Naive thymus-derived CD4-positive, alpha-beta T cell (primary cell): ENCODE measurements at regions of chr7 and their contacts with region 1.

Region 1: GRCh38 chr7:22854158-22855048 is 31.8 kb upstream of the TOMM7 start:
- DNase-seq: peak in 8 of 9 donors; percentile 9 to 87 (median 70)
- ATAC-seq: peak; percentile 39
- H3K4me3 ChIP-seq: peak overlapping the region; percentile 88
- H3K4me3 Mint-ChIP-seq: peak overlapping the region; percentile 90 to 97 (median 94)
- H3K27ac ChIP-seq: peak overlapping the region; percentile 93
- H3K27ac Mint-ChIP-seq: peak overlapping the region; percentile 85 to 97 (median 92)
- H3K4me1 ChIP-seq: peaks cover 0 to 4% of the 10 kb centered on the region in 2 donors
- H3K4me1 Mint-ChIP-seq: peaks cover 11 to 37% (median 16%) of the 10 kb centered on the region in 7 donors
- H3K27me3 ChIP-seq: no peaks in the 10 kb centered on the region
- H3K27me3 Mint-ChIP-seq: peaks cover 0 to 5% (median 0%) of the 10 kb centered on the region in 5 donors

Region 2: DNA sequence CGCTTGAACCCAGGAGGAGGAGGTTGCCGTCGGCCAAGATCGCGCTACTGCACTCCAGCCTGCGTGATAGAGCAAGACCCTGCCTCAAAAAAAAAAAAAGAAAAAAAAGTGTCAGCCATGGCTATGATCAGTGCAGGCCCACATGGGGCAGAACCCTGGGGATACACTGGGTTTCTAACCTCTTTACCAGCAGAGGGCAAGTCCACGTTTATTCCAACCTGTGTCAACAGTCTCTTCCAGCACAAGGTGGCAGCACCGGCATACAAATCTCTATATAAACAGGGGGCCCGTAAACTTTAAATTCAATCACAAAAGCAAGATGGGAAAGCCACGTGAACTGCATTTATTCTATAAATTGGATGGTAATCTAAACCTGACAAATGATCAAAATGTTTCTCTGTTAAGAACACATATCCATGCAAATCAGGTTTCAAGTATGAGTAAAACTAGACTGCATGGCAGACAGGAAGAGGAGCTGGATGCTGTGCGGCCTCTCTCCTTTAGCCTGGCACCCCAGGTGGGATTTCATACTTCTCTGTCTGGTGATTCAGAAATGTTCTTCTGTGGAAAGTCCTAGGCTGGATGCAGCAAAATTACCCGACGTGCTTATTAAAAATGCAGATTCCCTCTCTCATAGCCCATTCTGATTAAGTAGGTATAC is 294.4 kb before region 1 on chr7:
- CTCF ChIA-PET with region 1: no interaction called
- POLR2A ChIA-PET with region 1: no interaction called
- intact Hi-C with region 1: loop called in 1 of 2 experiments (anchors 2 kb)
- DNase-seq: peak in 8 of 9 donors; percentile 48 to 77 (median 66)
- ATAC-seq: peak; percentile 94
- H3K4me3 ChIP-seq: no peak overlapping the region
- H3K4me3 Mint-ChIP-seq: no peak overlapping the region
- H3K27ac ChIP-seq: no peak overlapping the region
- H3K27ac Mint-ChIP-seq: peak overlapping the region in 1 of 9 donors; percentile 3
- H3K4me1 ChIP-seq: peaks cover 19 to 22% of the 10 kb centered on the region in 2 donors
- H3K4me1 Mint-ChIP-seq: peaks cover 18 to 44% (median 25%) of the 10 kb centered on the region in 7 donors
- H3K27me3 ChIP-seq: no peaks in the 10 kb centered on the region
- H3K27me3 Mint-ChIP-seq: peaks cover 5 to 16% (median 9%) of the 10 kb centered on the region in 5 donors

Region 3: DNA sequence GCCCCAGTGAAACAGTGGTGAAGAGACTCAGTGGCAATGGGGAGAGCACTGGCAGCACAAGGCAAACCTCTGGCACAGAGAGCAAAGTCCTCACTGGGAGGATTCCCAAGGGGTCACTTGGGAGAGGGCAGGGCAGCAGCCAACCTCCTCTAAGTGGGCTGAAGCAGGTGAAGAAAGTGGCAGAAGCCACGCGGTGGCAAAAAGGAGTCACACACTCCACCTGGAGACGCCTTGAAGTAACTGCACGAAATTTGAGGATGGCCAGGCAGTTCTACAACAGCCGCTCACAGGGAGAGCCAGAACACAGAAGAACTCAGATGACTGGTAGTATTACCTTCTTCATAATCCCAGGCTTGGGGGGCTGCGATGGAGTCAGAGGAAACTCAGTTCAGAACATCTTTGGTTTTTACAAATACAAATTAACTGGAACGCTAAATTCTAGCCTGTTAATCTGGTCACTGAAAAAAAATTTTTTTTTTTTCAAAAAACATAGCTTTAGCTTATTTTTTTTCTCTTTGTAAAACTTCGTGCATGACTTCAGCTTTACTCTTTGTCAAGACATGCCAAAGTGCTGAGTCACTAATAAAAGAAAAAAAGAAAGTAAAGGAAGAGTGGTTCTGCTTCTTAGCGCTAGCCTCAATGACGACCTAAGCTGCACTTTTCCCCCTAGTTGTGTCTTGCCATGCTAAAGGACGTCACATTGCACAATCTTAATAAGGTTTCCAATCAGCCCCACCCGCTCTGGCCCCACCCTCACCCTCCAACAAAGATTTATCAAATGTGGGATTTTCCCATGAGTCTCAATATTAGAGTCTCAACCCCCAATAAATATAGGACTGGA is 127.8 kb before region 1 on chr7:
- CTCF ChIA-PET with region 1: no interaction called
- POLR2A ChIA-PET with region 1: no interaction called
- intact Hi-C with region 1: loop called in 1 of 2 experiments (anchors 2 kb)
- DNase-seq: peak; percentile 19 to 67 (median 49)
- ATAC-seq: peak; percentile 84
- H3K4me3 ChIP-seq: no peak overlapping the region
- H3K4me3 Mint-ChIP-seq: peak overlapping the region; percentile 72 to 84 (median 78)
- H3K27ac ChIP-seq: no peak overlapping the region
- H3K27ac Mint-ChIP-seq: peak overlapping the region in 2 of 9 donors; percentile 15 to 41
- H3K4me1 ChIP-seq: peaks cover 0 to 5% of the 10 kb centered on the region in 2 donors
- H3K4me1 Mint-ChIP-seq: peaks cover 7 to 42% (median 21%) of the 10 kb centered on the region in 7 donors
- H3K27me3 ChIP-seq: no peaks in the 10 kb centered on the region
- H3K27me3 Mint-ChIP-seq: peaks cover 0 to 55% (median 4%) of the 10 kb centered on the region in 5 donors

Region 4: GRCh38 chr7:22885797-22886261 is 31.4 kb after region 1 on chr7:
- CTCF ChIA-PET with region 1: no interaction called
- POLR2A ChIA-PET with region 1: no interaction called
- intact Hi-C with region 1: loop called (anchors 1 to 5 kb)
- DNase-seq: peak in 7 of 9 donors; percentile 5 to 58 (median 47)
- ATAC-seq: peak; percentile 69
- H3K4me3 ChIP-seq: no peak overlapping the region
- H3K4me3 Mint-ChIP-seq: peak overlapping the region in 8 of 10 donors; percentile 19 to 84 (median 36)
- H3K27ac ChIP-seq: peak overlapping the region; percentile 8
- H3K27ac Mint-ChIP-seq: peak overlapping the region in 7 of 9 donors; percentile 19 to 95 (median 67)
- H3K4me1 ChIP-seq: peaks cover 8 to 9% of the 10 kb centered on the region in 2 donors
- H3K4me1 Mint-ChIP-seq: peaks cover 5 to 39% (median 14%) of the 10 kb centered on the region in 7 donors
- H3K27me3 ChIP-seq: no peaks in the 10 kb centered on the region
- H3K27me3 Mint-ChIP-seq: no peaks in the 10 kb centered on the region

Region 5: DNA sequence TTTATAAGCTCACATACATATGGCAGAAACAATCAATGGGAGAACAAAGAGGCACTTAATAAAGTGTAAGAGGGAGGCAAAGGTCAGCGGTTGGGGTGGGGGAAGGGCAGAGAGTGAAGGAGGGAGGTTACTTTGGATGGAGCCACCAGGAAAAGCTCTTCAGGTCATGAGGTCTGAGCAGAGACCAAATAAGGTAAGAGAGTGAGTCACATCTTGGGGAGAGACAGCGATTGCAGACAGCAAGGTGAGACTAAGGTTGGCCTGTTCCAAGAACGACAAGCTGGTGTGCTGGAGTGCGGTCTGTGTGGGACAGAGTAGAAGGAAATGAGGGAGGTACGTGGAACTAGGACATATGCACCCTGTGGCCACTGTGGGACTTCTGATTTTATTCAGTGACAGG is 42.5 kb after region 1 on chr7:
- CTCF ChIA-PET with region 1: no interaction called
- POLR2A ChIA-PET with region 1: no interaction called
- intact Hi-C with region 1: no loop called
- DNase-seq: no peak
- ATAC-seq: no peak
- H3K4me3 ChIP-seq: no peak overlapping the region
- H3K4me3 Mint-ChIP-seq: no peak overlapping the region
- H3K27ac ChIP-seq: no peak overlapping the region
- H3K27ac Mint-ChIP-seq: no peak overlapping the region
- H3K4me1 ChIP-seq: no peaks in the 10 kb centered on the region
- H3K4me1 Mint-ChIP-seq: peaks cover 0 to 17% (median 0%) of the 10 kb centered on the region in 7 donors
- H3K27me3 ChIP-seq: no peaks in the 10 kb centered on the region
- H3K27me3 Mint-ChIP-seq: peaks cover 0 to 18% (median 11%) of the 10 kb centered on the region in 5 donors

Region 6: GRCh38 chr7:23055582-23056178 is 201.3 kb after region 1 on chr7:
- CTCF ChIA-PET with region 1: interaction called, 3 read pairs
- POLR2A ChIA-PET with region 1: no interaction called
- intact Hi-C with region 1: loop called (anchors 1 kb)
- DNase-seq: peak in 8 of 9 donors; percentile 42 to 71 (median 64)
- ATAC-seq: peak; percentile 98
- H3K4me3 ChIP-seq: no peak overlapping the region
- H3K4me3 Mint-ChIP-seq: no peak overlapping the region
- H3K27ac ChIP-seq: no peak overlapping the region
- H3K27ac Mint-ChIP-seq: no peak overlapping the region
- H3K4me1 ChIP-seq: no peaks in the 10 kb centered on the region
- H3K4me1 Mint-ChIP-seq: peaks cover 0 to 10% (median 0%) of the 10 kb centered on the region in 7 donors
- H3K27me3 ChIP-seq: no peaks in the 10 kb centered on the region
- H3K27me3 Mint-ChIP-seq: peaks cover 0 to 7% (median 0%) of the 10 kb centered on the region in 5 donors

Region 7: GRCh38 chr7:23181684-23182553 is 327.5 kb after region 1 on chr7 and contains the start of gene NUP42:
- CTCF ChIA-PET with region 1: no interaction called
- POLR2A ChIA-PET with region 1: no interaction called
- intact Hi-C with region 1: loop called (anchors 1 to 10 kb)
- DNase-seq: peak; percentile 87 to 95 (median 93)
- ATAC-seq: peak; percentile 97
- H3K4me3 ChIP-seq: peak within 1 kb of the TSS; percentile 86
- H3K4me3 Mint-ChIP-seq: peak within 1 kb of the TSS; percentile 95 to 100 (median 98)
- H3K27ac ChIP-seq: peak within 1 kb of the TSS; percentile 85
- H3K27ac Mint-ChIP-seq: peak within 1 kb of the TSS; percentile 97 to 99 (median 98)
- H3K4me1 ChIP-seq: peaks cover 16 to 17% of the 10 kb centered on the region in 2 donors
- H3K4me1 Mint-ChIP-seq: peaks cover 20 to 50% (median 43%) of the 10 kb centered on the region in 7 donors
- H3K27me3 ChIP-seq: no peaks in the 10 kb centered on the region
- H3K27me3 Mint-ChIP-seq: peaks cover 0 to 16% (median 0%) of the 10 kb centered on the region in 5 donors
- total RNA-seq, gene NUP42: 19.8 to 37.7 (median 27.5) TPM